Lower leg skin (tissue), 4 donors: ENCODE measurements at regions of chr21 and their contacts with region 1.

Region 1: DNA sequence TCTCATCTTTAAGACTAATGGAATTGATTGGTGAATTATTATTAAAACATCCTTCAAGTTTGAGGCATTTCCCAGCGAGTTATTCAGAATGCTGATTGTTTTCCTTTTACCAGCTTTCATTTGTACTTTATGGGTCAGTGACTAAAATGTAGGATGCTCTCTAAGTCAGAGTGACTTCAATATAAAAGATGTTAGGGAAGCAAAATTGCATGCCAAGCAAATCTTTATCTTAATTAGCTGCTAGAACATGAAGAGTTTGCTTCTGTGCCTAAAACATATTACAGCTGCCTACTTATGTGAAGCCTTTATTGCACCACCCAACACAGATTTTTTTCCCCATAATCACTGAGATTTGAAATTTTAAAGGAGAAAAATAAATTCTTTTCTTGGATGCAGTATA is 79.8 kb upstream of the CYYR1 start:
- DNase-seq: no peak
- H3K4me3 ChIP-seq: no peak overlapping the region
- CTCF ChIP-seq: no peak
- POLR2A ChIP-seq: no peak

Region 2: GRCh38 chr21:26469789-26470188 is 183.1 kb before region 1 on chr21:
- intact Hi-C with region 1: no loop called
- DNase-seq: peak in 1 of 2 donors; percentile 71
- H3K4me3 ChIP-seq: no peak overlapping the region
- CTCF ChIP-seq: no peak
- POLR2A ChIP-seq: no peak

Region 3: GRCh38 chr21:26614251-26614650 is 38.6 kb before region 1 on chr21:
- intact Hi-C with region 1: no loop called
- DNase-seq: no peak
- H3K4me3 ChIP-seq: no peak overlapping the region
- CTCF ChIP-seq: no peak
- POLR2A ChIP-seq: no peak

Region 4: GRCh38 chr21:26637201-26637745 is 15.6 kb before region 1 on chr21:
- intact Hi-C with region 1: loop called (anchors 1 kb)
- DNase-seq: no peak
- H3K4me3 ChIP-seq: no peak overlapping the region
- CTCF ChIP-seq: no peak
- POLR2A ChIP-seq: no peak

Region 5: GRCh38 chr21:27722095-27722494 is 1069.2 kb after region 1 on chr21:
- intact Hi-C with region 1: no loop called
- DNase-seq: no peak
- H3K4me3 ChIP-seq: no peak overlapping the region
- CTCF ChIP-seq: no peak
- POLR2A ChIP-seq: no peak